Endothelial cell of umbilical vein (primary cell): ENCODE measurements at regions of chr10 and their contacts with region 1.

Region 1: GRCh38 chr10:116287906-116288501 is 15.0 kb upstream of the GFRA1 start:
- DNase-seq: peak; percentile 51
- H3K4me3 ChIP-seq: no peak overlapping the region
- H3K27ac ChIP-seq: no peak overlapping the region
- H3K4me1 ChIP-seq: no peaks in the 10 kb centered on the region
- H3K27me3 ChIP-seq: no peaks in the 10 kb centered on the region
- CTCF ChIP-seq: peak; percentile 36 to 42
- POLR2A ChIP-seq: no peak

Region 2: DNA sequence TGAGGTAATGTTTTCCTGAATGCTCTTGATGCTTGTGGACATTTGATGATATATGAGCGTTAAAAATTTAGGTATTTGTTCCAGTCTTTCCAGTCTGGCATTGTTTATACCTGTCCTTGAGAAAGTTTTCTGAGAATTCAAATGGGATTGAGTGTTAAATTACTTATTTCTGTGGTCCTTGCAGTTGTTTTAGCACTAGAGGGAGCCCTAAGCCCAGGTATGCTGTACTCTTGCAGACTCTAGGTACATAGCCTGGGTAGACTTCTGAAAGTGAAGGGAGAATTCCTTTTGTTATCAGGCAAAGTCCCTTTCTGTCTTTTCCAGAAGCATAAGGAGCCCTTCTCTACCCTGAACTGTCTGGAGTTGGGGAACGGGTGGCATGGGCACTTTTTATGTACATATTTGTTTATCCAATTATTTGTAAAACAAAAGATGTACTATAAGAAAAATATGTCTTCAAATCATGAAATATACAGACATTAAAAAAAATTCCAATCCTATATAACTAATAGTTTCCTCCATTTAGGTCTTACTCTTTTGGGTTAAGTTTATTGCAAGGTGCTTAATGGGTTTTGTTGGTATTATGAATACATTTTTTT is 932.7 kb before region 1 on chr10:
- CTCF ChIA-PET with region 1: interaction called, 4 read pairs
- POLR2A ChIA-PET with region 1: no interaction called
- dilution Hi-C with region 1: no loop called
- intact Hi-C with region 1: loop called (anchors 1 kb)
- DNase-seq: peak; percentile 49
- H3K4me3 ChIP-seq: no peak overlapping the region
- H3K27ac ChIP-seq: no peak overlapping the region
- H3K4me1 ChIP-seq: no peaks in the 10 kb centered on the region
- H3K27me3 ChIP-seq: no peaks in the 10 kb centered on the region
- CTCF ChIP-seq: peak; percentile 43 to 63
- POLR2A ChIP-seq: no peak

Region 3: DNA sequence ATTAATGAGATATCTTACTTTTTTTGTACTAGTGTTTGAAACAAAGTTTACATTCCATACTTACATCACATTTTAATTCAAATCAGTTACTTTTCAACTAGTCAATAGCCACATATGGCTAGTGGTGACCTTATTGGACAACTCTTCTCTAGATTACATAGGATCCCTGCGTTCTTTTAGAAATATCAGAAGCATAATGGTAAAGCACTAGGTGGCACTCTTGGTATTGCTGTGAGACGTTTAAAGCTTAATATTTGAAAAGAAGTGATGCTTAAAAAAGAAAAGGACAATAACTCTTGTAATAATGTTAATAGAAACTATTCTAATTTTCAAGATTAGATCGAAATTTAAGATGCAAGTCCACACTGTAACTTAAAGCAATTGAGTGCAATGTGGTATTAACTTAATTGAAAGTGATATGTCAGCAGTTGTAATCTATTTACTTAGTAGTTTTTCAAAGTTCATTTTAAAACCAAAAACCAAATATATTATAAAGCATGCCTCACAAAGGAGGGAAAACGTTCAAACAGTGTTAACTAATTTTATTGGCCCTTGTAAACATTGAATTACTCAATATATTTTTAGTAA is 855.7 kb before region 1 on chr10:
- CTCF ChIA-PET with region 1: interaction called, 14 read pairs
- POLR2A ChIA-PET with region 1: no interaction called
- dilution Hi-C with region 1: no loop called
- intact Hi-C with region 1: no loop called
- DNase-seq: peak; percentile 3
- H3K4me3 ChIP-seq: no peak overlapping the region
- H3K27ac ChIP-seq: no peak overlapping the region
- H3K4me1 ChIP-seq: no peaks in the 10 kb centered on the region
- H3K27me3 ChIP-seq: no peaks in the 10 kb centered on the region
- CTCF ChIP-seq: no peak
- POLR2A ChIP-seq: no peak

Region 4: DNA sequence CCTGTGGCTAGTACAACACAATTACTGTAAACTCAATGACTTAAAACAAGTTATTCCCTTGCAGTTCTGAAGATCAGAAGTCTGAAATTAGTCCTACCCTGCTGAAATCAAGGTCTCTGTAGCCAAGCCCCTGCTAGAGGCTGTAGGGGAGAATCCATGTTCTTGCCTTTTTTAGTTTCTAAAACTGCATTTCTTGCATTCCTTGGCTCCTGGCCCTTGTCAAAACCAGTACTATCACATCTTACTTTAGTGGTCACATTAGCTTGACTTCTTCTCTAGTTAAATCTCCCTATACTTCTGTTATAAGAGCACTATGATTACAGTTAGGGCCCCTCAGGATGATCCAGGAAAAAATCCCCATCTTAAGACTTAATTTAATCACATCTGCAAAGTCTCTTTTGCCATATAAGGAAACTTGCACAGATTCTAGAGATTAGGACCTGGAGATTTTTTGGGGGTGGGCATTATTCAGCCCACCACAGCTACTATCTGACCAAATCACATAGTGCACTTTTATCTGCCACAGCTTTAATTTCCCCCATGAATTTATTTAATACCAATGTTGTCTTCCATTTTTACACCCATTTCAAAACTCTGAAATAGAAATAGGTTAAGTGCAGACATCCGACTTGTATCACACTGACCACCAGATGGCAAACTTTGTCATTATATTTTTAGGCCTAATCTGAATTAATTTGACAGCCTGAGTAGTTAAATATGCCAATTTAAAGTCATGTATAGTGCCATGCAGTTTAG is 581.8 kb before region 1 on chr10:
- CTCF ChIA-PET with region 1: interaction called, 83 read pairs
- POLR2A ChIA-PET with region 1: no interaction called
- dilution Hi-C with region 1: no loop called
- intact Hi-C with region 1: loop called (anchors 1 kb)
- DNase-seq: peak; percentile 26
- H3K4me3 ChIP-seq: no peak overlapping the region
- H3K27ac ChIP-seq: no peak overlapping the region
- H3K4me1 ChIP-seq: no peaks in the 10 kb centered on the region
- H3K27me3 ChIP-seq: no peaks in the 10 kb centered on the region
- CTCF ChIP-seq: peak; percentile 12 to 20
- POLR2A ChIP-seq: no peak

Region 5: GRCh38 chr10:115829521-115830205 is 458.3 kb before region 1 on chr10:
- CTCF ChIA-PET with region 1: interaction called, 24 read pairs
- POLR2A ChIA-PET with region 1: no interaction called
- dilution Hi-C with region 1: no loop called
- intact Hi-C with region 1: no loop called
- DNase-seq: no peak
- H3K4me3 ChIP-seq: no peak overlapping the region
- H3K27ac ChIP-seq: no peak overlapping the region
- H3K4me1 ChIP-seq: no peaks in the 10 kb centered on the region
- H3K27me3 ChIP-seq: no peaks in the 10 kb centered on the region
- CTCF ChIP-seq: no peak
- POLR2A ChIP-seq: no peak